Natural killer cell (primary cell): ENCODE measurements at regions of chr19 and their contacts with region 1.

Region 1: DNA sequence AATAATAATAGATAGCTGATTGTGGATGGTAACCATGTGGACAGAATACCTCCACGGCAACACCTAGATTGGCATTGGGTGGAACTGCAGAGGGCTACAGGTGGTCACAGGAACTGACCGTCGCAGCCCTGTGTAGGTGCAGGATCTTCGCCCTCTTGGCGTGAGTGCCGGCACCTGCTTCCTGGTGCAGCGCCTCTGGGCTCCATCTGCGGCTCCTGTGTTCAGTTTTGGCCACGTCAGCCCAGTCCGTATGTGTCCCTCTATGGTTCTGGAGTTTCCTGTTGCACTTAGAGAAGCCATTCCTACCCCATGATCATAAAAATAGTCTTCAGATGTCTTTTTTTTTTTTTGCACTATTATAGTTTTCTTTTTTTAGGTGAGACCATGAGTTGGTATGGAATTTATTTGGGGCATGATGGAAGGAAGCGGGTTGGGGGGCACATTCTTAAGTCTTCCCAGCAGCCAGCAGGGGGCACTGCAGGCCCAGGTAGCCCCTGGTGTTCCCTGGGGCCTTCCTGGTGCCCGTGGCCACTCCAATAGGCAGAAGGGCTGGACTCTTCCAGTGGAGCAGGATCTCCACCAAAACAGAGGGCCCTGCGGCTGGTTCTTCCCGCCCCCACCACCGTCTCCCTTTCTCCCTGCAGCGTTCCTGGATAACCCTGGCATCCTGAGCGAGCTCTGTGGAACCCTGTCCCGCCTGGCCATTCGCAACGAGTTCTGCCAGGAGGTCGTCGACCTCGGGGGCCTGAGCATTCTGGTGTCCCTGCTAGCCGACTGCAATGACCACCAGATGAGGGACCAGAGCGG is 10.1 kb upstream of the SLC25A42 start:
- DNase-seq: peak; percentile 58 to 86
- ATAC-seq: peak in 2 of 3 donors; percentile 79 to 82
- H3K4me3 ChIP-seq: no peak overlapping the region
- H3K4me3 Mint-ChIP-seq: no peak overlapping the region
- H3K27ac ChIP-seq: no peak overlapping the region
- H3K27ac Mint-ChIP-seq: no peak overlapping the region
- H3K4me1 ChIP-seq: no peaks in the 10 kb centered on the region
- H3K4me1 Mint-ChIP-seq: no peaks in the 10 kb centered on the region
- H3K27me3 ChIP-seq: no peaks in the 10 kb centered on the region
- H3K27me3 Mint-ChIP-seq: no peaks in the 10 kb centered on the region
- CTCF ChIP-seq: peak; percentile 66

Region 2: DNA sequence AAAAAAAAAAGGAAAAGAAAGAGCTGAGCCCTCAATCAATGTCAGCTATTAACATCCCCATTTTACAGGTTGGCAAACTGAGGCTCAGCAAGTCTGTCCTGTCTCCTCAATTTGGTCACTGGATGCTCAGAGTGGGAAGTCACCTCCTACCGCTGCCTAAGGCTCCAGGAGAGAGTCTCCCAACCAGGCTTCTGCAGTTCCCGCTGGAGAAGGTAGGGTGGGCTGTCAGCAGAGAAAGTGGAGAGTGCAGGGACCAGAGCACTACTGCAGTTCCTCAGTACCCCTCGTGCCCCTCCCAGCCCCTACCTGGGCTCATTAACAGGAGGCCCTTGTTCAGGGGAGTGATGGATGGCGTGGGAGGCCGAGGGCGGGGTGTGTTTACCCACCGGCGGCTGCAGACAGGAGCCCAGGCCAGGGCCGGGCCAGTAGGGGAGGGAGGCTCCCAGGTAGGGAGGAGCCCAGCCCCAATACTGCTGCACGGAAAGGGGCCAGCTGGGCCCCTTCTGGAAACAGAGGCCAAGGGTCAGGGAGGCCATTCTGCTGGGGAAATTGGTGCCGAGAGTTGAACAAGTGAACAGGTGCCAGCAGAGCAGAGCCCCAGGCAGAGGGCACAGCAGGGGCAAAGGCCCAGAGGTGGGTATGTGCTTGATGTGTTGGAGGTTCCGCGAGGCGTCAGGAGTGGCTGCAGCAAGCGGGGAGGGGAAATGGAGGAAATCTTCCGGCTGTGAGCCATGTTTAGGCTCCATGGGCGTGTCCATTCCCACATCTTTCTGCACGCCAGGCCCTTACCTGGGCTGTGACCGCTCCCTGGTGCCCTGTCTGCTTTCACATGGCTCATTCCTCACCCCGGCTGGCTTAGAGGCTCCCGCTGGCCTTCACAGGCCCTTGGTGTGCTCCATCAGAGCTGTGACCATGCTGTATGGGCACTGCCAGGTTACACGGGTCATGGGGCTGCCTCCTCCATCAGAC is 255.0 kb before region 1 on chr19:
- intact Hi-C with region 1: no loop called
- DNase-seq: no peak
- ATAC-seq: peak in 1 of 3 donors; percentile 17
- H3K4me3 ChIP-seq: no peak overlapping the region
- H3K4me3 Mint-ChIP-seq: no peak overlapping the region
- H3K27ac ChIP-seq: no peak overlapping the region
- H3K27ac Mint-ChIP-seq: no peak overlapping the region
- H3K4me1 ChIP-seq: no peaks in the 10 kb centered on the region
- H3K4me1 Mint-ChIP-seq: no peaks in the 10 kb centered on the region
- H3K27me3 ChIP-seq: peaks cover 16% of the 10 kb centered on the region
- H3K27me3 Mint-ChIP-seq: peaks cover 11 to 14% of the 10 kb centered on the region in 2 donors
- CTCF ChIP-seq: no peak

Region 3: GRCh38 chr19:19138169-19138981 is 84.7 kb after region 1 on chr19 and contains the start of gene TMEM161A:
- intact Hi-C with region 1: loop called (anchors 1 kb)
- DNase-seq: peak; percentile 97 to 98
- ATAC-seq: peak; percentile 99 to 100 (median 99)
- H3K4me3 ChIP-seq: peak within 1 kb of the TSS; percentile 88
- H3K4me3 Mint-ChIP-seq: peak within 1 kb of the TSS; percentile 95
- H3K27ac ChIP-seq: peak within 1 kb of the TSS; percentile 74
- H3K27ac Mint-ChIP-seq: peak within 1 kb of the TSS; percentile 82 to 99
- H3K4me1 ChIP-seq: peaks cover 26% of the 10 kb centered on the region
- H3K4me1 Mint-ChIP-seq: peaks cover 17 to 29% of the 10 kb centered on the region in 2 donors
- H3K27me3 ChIP-seq: no peaks in the 10 kb centered on the region
- H3K27me3 Mint-ChIP-seq: no peaks in the 10 kb centered on the region
- CTCF ChIP-seq: no peak
- total RNA-seq, gene TMEM161A: 13.9 to 16.5 (median 14.2) TPM